Activated naive CD4-positive, alpha-beta T cell treated with anti-CD3 and anti-CD28 coated beads for 36 hours (primary cell): ENCODE measurements at regions of chr7 and their contacts with region 1.

Region 1: DNA sequence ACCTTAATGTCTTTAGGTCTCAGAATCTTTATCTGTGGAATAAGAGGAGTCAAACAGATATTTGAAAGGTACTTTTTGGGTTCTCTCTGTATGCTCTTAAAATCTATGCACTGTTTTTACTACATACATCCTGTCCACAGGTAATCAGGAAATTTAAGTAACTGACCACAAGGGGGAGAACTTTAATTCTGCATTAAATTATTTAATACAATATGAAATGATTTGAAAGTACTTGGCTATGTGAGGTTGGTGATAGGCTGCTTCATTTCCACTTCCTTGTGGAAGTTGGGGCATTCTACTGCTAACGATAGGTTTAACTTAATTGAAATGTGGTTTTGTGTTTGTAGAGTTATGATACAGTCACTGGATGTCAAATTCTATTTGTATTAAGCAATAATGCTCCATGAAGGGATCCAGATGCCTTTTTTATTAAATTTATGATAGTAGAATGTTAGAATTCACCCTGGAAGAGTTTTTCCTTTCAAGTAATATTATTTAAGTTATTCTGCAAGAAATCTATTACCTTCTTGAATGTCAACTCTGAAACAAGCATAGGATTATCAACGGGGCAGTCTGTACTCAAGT is 6.0 kb downstream of the TEX47 start:
- DNase-seq: no peak
- H3K4me3 Mint-ChIP-seq: no peak overlapping the region
- H3K27ac Mint-ChIP-seq: no peak overlapping the region
- H3K4me1 Mint-ChIP-seq: no peaks in the 10 kb centered on the region
- H3K27me3 Mint-ChIP-seq: no peaks in the 10 kb centered on the region

Region 2: GRCh38 chr7:88344956-88345832 is 444.4 kb before region 1 on chr7:
- CTCF ChIA-PET with region 1: no interaction called
- intact Hi-C with region 1: no loop called
- DNase-seq: peak; percentile 22
- H3K4me3 Mint-ChIP-seq: no peak overlapping the region
- H3K27ac Mint-ChIP-seq: no peak overlapping the region
- H3K4me1 Mint-ChIP-seq: no peaks in the 10 kb centered on the region
- H3K27me3 Mint-ChIP-seq: peaks cover 19% of the 10 kb centered on the region

Region 3: DNA sequence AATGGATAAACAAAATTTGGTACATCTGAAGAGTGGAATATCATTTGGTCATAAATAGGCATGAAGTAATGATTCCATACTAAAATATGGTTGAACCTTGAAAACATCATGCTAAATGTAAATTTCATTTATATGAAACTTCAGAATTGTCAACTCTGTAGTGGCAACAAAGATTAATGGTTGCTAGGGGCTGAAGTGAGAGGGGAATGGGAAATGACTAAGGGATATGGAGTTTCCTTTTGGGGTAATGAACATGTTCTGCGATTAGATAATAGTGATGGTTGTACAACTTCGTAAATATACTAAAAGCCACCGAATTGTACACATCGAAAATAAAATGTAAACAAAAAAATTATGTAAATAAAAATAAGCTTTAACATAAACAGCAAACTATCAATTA is 980.6 kb after region 1 on chr7:
- CTCF ChIA-PET with region 1: no interaction called
- intact Hi-C with region 1: loop called (anchors 1 kb)
- DNase-seq: no peak
- H3K4me3 Mint-ChIP-seq: no peak overlapping the region
- H3K27ac Mint-ChIP-seq: no peak overlapping the region
- H3K4me1 Mint-ChIP-seq: no peaks in the 10 kb centered on the region
- H3K27me3 Mint-ChIP-seq: peaks cover 2% of the 10 kb centered on the region